ENCODE measurements at regions of chr9 and their contacts with region 1.

Region 1: DNA sequence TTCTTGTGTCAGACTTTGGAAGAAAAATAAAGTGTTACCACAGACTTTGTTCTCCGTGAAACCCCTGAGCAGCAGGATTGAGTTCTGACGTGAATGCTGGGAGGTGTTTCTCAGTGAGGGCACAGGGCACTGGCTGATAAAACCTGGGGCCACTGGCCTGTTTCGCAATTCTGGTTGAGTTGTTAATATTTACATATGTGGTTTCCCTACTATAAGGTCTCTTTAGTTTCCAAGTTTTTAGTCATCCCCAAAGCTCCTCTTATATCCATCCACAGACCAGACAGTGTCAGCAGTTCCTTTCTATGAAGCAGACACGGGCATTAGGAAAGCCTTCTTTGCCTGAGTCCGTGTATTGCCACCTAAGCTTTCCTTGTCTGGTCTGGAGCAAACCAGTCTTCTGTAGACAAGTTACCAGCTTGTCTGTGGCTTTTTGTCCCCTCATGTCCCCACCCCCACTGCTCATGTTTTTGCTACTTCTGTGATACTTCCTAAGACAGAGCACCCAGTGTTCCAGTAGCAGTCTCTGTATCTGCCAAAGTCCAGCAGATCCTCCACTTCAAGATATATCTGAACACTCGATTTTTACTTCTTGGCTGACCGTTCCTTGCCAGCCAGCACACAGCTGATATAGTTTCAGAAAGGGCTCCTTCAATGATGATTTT is 42.0 kb downstream of the ACO1 start:
- DNase-seq: peak; percentile 31
- ATAC-seq: peak; percentile 82 to 84

Region 2: DNA sequence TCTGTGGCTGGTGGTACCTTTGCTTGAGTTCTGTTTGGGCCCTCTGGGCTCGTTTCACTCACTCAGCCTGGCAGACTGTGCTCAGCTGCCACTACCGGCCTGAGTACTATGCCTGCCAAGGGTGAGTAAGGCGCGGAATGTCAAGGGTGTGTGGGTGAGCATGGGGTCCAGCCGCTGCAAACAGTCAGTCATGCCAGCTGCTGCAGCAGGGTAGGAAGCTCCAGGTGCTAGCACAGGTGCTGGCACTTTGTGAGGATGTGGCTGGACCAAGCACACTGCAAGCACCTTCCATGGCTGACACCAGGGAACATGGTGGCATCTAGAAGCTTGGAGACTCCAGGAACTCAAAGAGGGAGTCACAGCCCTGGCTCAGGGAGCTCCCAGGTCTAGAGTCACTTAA is 410.6 kb before region 1 on chr9:
- intact Hi-C with region 1: no loop called
- DNase-seq: no peak
- ATAC-seq: no peak

Region 3: DNA sequence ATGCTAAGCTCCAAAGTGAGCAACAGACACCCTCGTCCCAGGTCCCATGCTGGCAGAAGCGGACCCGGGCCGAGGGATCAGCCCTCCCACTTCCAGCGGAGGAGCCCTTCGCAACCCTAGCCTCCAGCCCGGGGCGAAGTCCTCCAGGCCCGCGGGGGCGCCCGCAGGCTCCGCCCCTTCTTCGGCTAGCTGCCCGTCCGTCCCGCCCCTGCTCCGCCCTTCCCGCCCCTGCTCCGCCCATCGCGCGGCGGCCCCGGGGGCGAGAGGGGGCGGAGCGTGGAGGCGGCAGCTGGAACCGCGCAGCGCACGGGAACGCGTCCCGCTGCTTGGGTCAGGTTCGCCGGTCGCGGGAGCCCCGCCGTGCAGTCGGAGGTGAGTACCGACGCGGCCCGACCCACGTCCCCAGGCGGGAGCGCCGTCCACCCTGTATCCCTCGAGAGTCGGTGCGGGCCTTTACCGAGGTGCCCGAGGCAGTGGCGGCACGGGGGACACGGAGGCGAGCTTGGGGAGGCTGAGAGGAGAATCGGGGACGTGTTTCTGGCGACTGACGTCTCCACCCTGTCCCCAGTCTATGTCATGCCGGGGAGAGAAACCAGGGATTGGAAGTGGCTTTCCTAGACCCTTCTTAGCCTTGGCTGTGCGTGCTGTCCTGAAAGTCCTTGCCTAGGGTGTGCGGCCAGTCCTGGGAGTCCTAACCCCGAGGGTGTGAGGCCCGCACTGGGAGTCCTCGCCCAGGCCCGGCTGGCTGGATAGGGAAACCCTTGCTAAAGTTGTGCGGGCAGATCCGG is 41.9 kb before region 1 on chr9 and contains the start of gene ACO1:
- intact Hi-C with region 1: loop called (anchors 2 to 5 kb)
- DNase-seq: peak; percentile 93
- ATAC-seq: peak; percentile 97 to 99
- total RNA-seq, gene ACO1: 59.6 to 62.0 TPM

Measured in left cardiac atrium (tissue), 4 donors.